ENCODE measurements at regions of chr10 and their contacts with region 1.

Region 1: DNA sequence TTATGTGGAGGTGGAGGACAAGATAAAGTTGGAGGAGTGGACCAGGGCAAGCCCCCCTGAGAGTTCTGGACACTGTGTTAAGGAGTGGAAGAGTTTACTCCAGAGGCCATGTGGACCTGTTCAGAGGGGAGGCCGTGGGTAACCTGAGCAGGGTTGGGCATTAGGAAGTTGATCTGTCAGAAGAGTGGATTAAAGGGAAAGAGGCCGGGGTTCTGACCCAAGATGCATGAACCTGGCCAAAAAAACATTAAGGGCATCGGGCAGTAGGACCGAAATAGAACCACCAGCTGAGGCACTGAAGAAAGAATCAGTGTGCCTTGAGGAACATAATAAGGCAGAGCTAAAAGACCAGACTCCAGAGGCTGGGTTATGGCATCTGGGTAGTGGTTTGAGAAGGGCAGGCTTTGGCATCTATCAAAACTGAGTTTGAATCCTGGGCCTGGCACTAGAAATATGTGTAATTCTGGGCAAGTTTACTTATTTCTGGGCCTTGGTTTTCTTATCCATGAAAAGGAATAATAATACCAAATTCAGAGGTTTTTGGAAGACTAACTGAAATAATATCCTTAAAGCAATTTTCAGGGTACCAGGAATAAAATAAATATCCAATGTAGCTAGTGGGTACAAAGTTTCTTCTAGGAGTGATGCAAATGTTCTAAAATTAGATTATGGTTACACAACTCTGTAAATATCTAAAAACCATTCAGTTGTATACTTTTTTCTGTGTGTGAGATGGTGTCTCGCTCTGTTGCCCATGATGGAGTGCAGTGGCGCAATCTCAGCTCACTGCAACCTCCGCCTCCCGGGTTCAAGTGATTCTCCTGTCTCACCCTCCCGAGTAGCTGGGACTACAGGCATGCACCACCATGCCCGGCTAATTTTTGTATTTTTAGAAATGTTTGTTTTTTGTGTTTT is 10.9 kb upstream of the FRAT1 start:
- DNase-seq: no peak
- ATAC-seq: peak; percentile 53
- H3K4me3 ChIP-seq: no peak overlapping the region
- H3K27ac ChIP-seq: no peak overlapping the region
- H3K4me1 ChIP-seq: peaks cover 27% of the 10 kb centered on the region
- H3K27me3 ChIP-seq: no peaks in the 10 kb centered on the region
- CTCF ChIP-seq: no peak
- EP300 ChIP-seq: no peak
- POLR2A ChIP-seq: no peak
- RAD21 ChIP-seq: no peak

Region 2: GRCh38 chr10:97327348-97328294 is 19.5 kb after region 1 on chr10:
- CTCF ChIA-PET with region 1: no interaction called
- POLR2A ChIA-PET with region 1: interaction called, 3 read pairs
- in situ Hi-C with region 1: no loop called
- intact Hi-C with region 1: loop called (anchors 1 kb)
- DNase-seq: peak; percentile 96
- ATAC-seq: peak; percentile 87
- H3K4me3 ChIP-seq: peak overlapping the region in 1 of 3 experiments; percentile 59; a peak in 2 of 6 replicates
- H3K27ac ChIP-seq: peak overlapping the region; percentile 91
- H3K4me1 ChIP-seq: peaks cover 74% of the 10 kb centered on the region
- H3K27me3 ChIP-seq: no peaks in the 10 kb centered on the region
- CTCF ChIP-seq: no peak
- EP300 ChIP-seq: peak; percentile 84 to 96
- POLR2A ChIP-seq: no peak
- RAD21 ChIP-seq: peak; percentile 20; the same call in 1 of the 2 replicates

Measured in HepG2 (cell line).